Activated CD8-positive, alpha-beta T cell treated with anti-CD3 and anti-CD28 coated beads for 36 hours (primary cell): ENCODE measurements at regions of chr17 and their contacts with region 1.

Region 1: DNA sequence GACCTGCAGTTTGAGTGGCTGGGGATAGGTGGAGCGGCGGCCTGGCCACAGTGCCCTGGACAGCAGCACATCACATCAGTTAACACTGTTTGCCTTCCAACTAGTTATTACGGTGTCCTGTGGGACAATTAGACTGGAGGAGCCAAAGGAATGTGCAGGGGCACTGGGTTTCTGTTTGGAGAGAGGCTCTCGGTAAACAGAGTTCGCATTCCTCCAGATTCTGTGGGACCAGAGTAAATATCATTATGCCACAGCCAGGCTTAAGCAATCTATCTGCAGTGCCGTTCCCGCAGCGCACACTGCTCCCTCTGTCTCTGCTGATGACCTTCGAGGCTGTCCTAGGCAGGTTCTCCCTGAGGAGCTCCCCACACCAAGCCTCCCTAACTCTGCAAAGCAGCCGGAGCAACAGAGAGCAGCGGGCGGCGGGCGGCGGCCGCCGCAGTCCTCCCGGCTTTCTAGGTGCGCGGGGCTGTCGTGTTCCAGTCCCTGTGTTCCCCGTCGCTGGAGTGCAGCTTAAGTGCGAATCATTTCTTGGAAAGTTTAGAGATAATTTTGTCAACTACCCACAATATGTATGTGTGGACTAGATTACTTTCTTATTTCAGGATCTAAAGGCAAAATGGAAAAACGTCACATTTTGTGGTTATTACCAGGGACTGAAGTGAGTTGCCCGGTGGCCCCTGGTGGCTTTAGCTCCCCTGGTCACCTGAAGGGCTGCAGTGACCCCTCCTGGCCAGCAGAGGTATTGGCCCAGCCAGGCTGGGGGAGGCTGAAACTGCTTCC is 43.2 kb downstream of the PGS1 start:
- DNase-seq: peak; percentile 79
- ATAC-seq: peak; percentile 96
- H3K4me3 Mint-ChIP-seq: no peak overlapping the region
- H3K27ac Mint-ChIP-seq: no peak overlapping the region
- H3K4me1 Mint-ChIP-seq: peaks cover 20% of the 10 kb centered on the region
- H3K27me3 Mint-ChIP-seq: no peaks in the 10 kb centered on the region
- CTCF ChIP-seq: peak; percentile 96

Region 2: GRCh38 chr17:78258323-78259191 is 163.1 kb before region 1 on chr17:
- CTCF ChIA-PET with region 1: interaction called, 15 read pairs
- POLR2A ChIA-PET with region 1: interaction called, 4 read pairs
- intact Hi-C with region 1: loop called (anchors 5 kb)
- DNase-seq: peak; percentile 80
- ATAC-seq: peak; percentile 61
- H3K4me3 Mint-ChIP-seq: peak overlapping the region; percentile 56
- H3K27ac Mint-ChIP-seq: peak overlapping the region; percentile 71
- H3K4me1 Mint-ChIP-seq: peaks cover 34% of the 10 kb centered on the region
- H3K27me3 Mint-ChIP-seq: no peaks in the 10 kb centered on the region
- CTCF ChIP-seq: no peak

Region 3: DNA sequence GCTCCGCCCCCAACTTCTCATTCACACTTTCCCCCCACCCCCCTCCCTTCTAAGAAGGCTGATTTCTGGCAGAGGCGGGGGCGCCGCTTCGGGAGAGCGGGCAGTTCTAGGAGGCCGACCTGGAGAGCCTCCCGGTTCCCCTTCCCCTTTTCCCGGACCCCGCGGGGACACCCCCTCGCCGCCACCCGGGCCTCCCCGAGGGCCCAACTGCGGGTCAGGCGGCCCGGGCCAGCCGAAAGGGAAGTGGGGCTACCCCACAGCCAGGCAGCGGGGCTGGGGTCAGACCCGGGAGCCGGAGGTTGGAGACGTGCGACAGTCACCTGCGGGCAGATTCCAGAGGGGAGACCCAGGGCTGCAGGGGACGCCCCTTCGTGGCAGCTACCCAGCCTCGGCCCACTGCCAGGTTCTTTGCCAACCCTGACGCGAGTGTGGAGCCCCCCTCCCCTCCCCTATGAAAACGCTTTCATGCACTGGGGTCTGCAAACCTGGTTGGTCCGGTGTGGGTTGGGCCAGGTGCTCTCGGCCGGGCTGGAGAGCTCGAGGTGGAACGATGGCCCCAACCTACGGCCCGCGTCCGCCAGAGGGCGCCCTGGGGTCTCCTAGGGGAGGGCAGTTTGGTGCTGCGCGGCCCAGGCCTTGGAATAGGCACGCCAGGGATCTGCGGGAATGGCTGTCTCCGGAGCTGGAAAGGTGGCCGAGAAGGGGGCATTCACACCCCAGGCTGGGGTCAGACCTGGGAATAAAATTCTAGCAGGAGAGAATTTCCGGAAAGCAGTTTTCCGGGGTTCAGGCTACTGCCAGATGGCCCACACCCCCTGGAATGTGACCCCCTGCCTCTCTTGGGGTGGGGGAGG is 61.1 kb before region 1 on chr17:
- CTCF ChIA-PET with region 1: interaction called, 99 read pairs
- POLR2A ChIA-PET with region 1: interaction called, 19 read pairs
- intact Hi-C with region 1: loop called (anchors 5 kb)
- DNase-seq: peak; percentile 97
- ATAC-seq: peak; percentile 43
- H3K4me3 Mint-ChIP-seq: peak overlapping the region; percentile 63
- H3K27ac Mint-ChIP-seq: peak overlapping the region; percentile 84
- H3K4me1 Mint-ChIP-seq: peaks cover 39% of the 10 kb centered on the region
- H3K27me3 Mint-ChIP-seq: peaks cover 13% of the 10 kb centered on the region
- CTCF ChIP-seq: peak; percentile 97

Region 4: GRCh38 chr17:78383725-78384471 is 37.8 kb before region 1 on chr17:
- CTCF ChIA-PET with region 1: interaction called, 11 read pairs
- POLR2A ChIA-PET with region 1: interaction called, 4 read pairs
- intact Hi-C with region 1: no loop called
- DNase-seq: peak; percentile 78
- ATAC-seq: peak; percentile 38
- H3K4me3 Mint-ChIP-seq: peak overlapping the region; percentile 60
- H3K27ac Mint-ChIP-seq: peak overlapping the region; percentile 99
- H3K4me1 Mint-ChIP-seq: peaks cover 86% of the 10 kb centered on the region
- H3K27me3 Mint-ChIP-seq: no peaks in the 10 kb centered on the region
- CTCF ChIP-seq: no peak

Region 5: DNA sequence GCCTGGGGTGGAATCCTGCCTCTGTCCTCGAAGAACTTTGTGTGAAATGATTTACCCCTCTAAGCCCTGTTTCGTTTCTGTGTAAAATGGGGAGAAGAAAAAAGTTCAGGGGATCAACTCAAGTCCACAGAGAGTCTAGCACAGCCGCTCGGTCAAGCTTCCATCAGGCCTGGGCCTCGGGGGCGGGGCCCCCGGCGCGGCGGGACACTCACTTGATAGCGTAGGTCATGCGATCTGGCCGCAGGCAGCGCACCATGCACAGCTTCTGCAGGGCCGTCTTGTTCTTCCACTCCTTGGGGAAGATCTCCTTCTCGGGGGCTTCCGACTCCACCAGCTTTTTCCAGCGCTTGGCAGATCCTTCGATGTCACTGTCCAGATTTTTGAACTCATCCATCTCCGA is 22.7 kb after region 1 on chr17:
- CTCF ChIA-PET with region 1: interaction called, 10 read pairs
- POLR2A ChIA-PET with region 1: no interaction called
- intact Hi-C with region 1: no loop called
- DNase-seq: no peak
- ATAC-seq: no peak
- H3K4me3 Mint-ChIP-seq: no peak overlapping the region
- H3K27ac Mint-ChIP-seq: no peak overlapping the region
- H3K4me1 Mint-ChIP-seq: no peaks in the 10 kb centered on the region
- H3K27me3 Mint-ChIP-seq: no peaks in the 10 kb centered on the region
- CTCF ChIP-seq: no peak